Sciatic nerve (tissue), 2 donors: ENCODE measurements at regions of chr13 and their contacts with region 1.

Region 1: DNA sequence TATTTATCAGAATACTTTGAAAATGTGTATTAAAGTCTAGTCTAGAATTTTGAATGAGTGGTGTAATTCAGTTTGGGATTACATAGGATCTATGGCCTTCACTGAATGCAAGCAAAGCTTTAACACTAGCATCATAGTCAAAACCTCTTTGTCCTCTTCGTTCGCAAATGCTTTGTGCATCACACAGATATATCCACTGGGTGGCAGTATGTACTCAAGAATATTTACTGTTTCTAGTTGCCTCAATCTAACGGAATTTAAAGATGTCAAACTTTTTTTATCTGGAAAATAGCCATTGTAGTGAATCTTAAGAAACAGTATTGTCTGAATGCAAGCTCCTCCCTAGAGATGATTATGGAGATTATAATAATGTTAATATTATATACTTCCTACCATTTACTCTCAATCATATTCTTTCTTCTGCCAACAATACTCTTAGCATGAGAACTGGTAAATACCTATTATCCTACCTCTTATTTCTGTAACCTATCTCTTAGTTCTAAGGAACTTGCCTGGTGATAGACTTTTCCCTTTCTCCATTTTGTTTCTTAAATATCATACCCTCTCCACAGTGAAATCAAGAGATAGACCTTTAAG is 25.8 kb downstream of the LACC1 start:
- DNase-seq: no peak
- ATAC-seq: peak; percentile 87

Region 2: GRCh38 chr13:43878892-43879754 is 26.4 kb before region 1 on chr13 and contains the start of gene CCDC122:
- intact Hi-C with region 1: no loop called
- DNase-seq: peak; percentile 87
- ATAC-seq: peak; percentile 91
- total RNA-seq, gene CCDC122: 5.2 TPM

Region 3: GRCh38 chr13:44435142-44435982 is 529.8 kb after region 1 on chr13:
- intact Hi-C with region 1: loop called (anchors 10 kb)
- DNase-seq: peak; percentile 97
- ATAC-seq: peak; percentile 88

Region 4: GRCh38 chr13:44470638-44471562 is 565.4 kb after region 1 on chr13:
- intact Hi-C with region 1: loop called (anchors 10 kb)
- DNase-seq: no peak
- ATAC-seq: no peak